Activated CD4-positive, alpha-beta T cell treated with anti-CD3 and anti-CD28 coated beads for 36 hours (primary cell): ENCODE measurements at regions of chr6 and their contacts with region 1.

Region 1: DNA sequence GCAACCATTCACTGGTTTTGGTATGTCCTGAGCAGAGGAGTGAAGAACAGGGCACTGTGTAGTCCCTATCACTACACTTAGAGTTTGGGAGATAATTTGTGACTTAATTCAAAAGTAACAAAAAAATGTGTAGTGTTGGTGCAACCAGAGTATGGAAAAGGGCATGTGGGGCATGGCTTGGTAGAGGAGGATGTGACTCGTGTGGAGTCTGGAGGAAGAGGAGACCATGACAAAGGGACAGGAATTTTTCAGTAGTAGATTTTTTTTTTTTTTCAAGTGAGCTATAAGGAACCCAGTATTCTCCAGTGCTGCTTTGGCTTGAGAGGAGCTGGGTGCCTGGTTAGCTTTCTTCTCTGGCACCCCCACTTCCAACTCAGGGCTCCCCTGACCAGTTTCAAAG is 5.1 kb downstream of the MTRES1 start:
- DNase-seq: no peak
- ATAC-seq: peak; percentile 7
- H3K4me3 Mint-ChIP-seq: no peak overlapping the region
- H3K27ac Mint-ChIP-seq: peak overlapping the region; percentile 28
- H3K4me1 Mint-ChIP-seq: peaks cover 39% of the 10 kb centered on the region
- H3K27me3 Mint-ChIP-seq: no peaks in the 10 kb centered on the region

Region 2: GRCh38 chr6:106629103-106629858 is 403.8 kb before region 1 on chr6 and contains the starts of genes QRSL1 and RTN4IP1:
- CTCF ChIA-PET with region 1: no interaction called
- POLR2A ChIA-PET with region 1: no interaction called
- intact Hi-C with region 1: loop called in 1 of 2 experiments (anchors 1 kb)
- DNase-seq: peak; percentile 90
- ATAC-seq: peak; percentile 91
- H3K4me3 Mint-ChIP-seq: peak within 1 kb of the TSS; percentile 97
- H3K27ac Mint-ChIP-seq: peak within 1 kb of the TSS; percentile 98
- H3K4me1 Mint-ChIP-seq: peaks cover 28% of the 10 kb centered on the region
- H3K27me3 Mint-ChIP-seq: no peaks in the 10 kb centered on the region
- total RNA-seq, gene QRSL1: 15.8 to 17.9 TPM
- total RNA-seq, gene RTN4IP1: 4.8 to 9.3 TPM

Region 3: GRCh38 chr6:107064579-107065065 is 31.5 kb after region 1 on chr6:
- CTCF ChIA-PET with region 1: interaction called, 3 read pairs
- POLR2A ChIA-PET with region 1: no interaction called
- intact Hi-C with region 1: loop called (anchors 2 to 5 kb)
- DNase-seq: peak; percentile 56
- ATAC-seq: peak; percentile 56
- H3K4me3 Mint-ChIP-seq: no peak overlapping the region
- H3K27ac Mint-ChIP-seq: peak overlapping the region; percentile 79
- H3K4me1 Mint-ChIP-seq: peaks cover 56% of the 10 kb centered on the region
- H3K27me3 Mint-ChIP-seq: no peaks in the 10 kb centered on the region

Region 4: DNA sequence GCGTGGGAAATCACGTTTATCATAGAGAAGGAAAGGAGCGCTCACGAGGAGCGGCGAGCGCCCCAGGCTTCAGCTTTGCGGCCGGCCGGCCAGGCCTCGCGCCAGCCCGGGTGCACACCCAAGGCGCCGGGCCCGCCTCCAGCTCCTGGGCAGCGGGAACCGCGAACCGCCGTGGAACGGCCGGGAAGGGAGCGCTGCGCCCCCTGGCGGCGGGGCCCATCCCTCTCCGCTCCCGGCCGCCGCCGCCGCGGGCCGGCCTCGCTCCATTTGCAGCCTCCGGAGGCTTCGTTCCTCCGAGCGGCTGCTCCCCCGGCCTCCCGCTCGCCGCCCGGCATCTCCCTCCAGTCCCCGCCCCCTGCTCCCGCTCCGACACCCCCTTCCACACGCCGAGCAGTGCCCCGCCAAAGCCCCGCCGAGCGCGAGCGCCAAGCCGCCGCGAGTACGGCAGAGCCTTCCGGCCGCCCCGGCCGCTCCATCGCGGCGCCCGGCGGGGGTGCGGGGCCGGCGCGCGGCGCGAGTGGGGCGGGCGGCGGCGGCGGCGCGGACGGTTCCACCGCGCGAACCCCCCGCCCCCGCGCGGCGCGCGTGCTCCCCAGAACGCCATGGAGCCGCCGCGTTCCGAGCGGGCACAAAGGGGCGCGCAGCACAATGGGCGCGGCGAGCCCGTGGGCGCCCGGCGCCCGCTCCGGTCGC is 81.2 kb after region 1 on chr6:
- CTCF ChIA-PET with region 1: interaction called, 12 read pairs
- POLR2A ChIA-PET with region 1: interaction called, 3 read pairs
- intact Hi-C with region 1: loop called (anchors 1 kb)
- DNase-seq: peak; percentile 84
- ATAC-seq: peak; percentile 62
- H3K4me3 Mint-ChIP-seq: peak overlapping the region; percentile 67
- H3K27ac Mint-ChIP-seq: peak overlapping the region; percentile 65
- H3K4me1 Mint-ChIP-seq: peaks cover 21% of the 10 kb centered on the region
- H3K27me3 Mint-ChIP-seq: peaks cover 5% of the 10 kb centered on the region